ENCODE measurements at regions of chr3 and their contacts with region 1.

Region 1: DNA sequence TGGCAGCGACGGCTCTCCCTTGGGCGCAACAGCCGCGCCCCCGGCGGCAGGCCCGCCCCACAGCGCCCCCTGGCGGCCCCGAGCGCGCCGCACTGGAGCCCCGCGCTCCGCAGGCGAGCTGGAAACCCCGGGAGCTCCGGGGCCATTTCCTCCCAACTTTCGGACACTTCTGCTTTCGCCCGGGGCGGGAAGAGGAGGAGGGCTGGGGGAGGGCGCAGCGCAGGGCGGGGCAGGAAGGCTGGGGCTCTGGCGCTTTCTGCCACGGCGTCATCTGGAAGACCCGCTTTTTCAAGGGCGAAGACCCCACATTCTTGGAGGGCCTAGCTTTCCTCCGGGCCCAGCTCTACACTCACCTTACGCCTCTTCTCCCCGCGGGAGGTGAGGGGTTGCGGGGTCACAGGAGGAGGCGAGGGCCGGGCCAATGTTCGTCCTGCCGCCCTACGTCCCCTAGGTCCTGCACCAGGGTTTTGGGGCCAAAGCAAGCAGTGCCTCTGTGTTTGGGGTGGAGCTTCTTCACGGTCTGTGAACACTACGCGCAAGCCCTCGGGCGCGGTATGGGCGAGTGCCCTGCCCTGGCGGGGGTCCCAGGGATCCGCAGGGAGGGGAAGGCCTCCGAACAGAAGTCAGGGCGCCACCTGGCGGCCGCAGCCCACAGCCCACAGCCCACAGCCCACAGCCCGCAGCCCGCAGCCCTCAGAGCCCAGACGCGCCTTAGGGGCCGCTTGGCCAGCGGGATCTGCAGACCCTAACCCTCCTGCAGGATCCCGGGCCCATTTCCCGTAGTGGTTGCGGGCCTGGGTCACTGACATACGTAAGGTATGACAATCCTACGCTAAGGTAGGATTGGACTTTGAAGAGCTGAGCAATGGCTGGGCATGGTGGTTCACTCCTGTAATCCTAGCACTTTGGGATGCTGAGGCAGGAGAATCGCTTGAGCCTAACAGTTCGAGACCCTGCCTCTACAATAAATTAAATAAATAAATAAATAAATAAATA is 31.1 kb downstream of the FOXL2 start:
- DNase-seq: peak; percentile 85
- ATAC-seq: peak; percentile 87
- H3K4me3 Mint-ChIP-seq: peak overlapping the region; percentile 75
- H3K27ac Mint-ChIP-seq: peak overlapping the region; percentile 40
- H3K4me1 Mint-ChIP-seq: peaks cover 7% of the 10 kb centered on the region
- H3K27me3 Mint-ChIP-seq: peaks cover 20% of the 10 kb centered on the region

Region 2: DNA sequence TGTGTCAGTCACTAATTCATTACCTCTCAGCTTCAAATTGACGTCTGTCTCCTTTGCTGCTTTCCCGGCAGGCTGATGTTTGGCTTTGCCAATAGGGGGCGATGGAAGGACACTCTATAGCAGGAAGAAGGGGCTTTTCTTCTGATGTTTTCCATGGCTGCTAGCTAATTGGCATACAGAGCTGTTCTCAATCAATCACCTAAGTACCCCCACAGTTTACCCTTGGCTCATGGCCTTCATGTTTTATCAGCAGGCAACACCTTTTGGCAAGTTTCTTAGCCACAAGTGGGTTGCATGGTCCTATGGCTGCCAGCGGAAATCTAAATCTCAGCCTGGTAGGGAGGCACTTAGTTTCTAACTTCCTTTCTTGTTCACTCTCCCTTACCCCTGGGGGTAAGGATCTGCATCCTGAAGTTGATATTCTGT is 436.4 kb before region 1 on chr3:
- CTCF ChIA-PET with region 1: interaction called, 10 read pairs
- DNase-seq: peak; percentile 62
- ATAC-seq: peak; percentile 58
- H3K4me3 Mint-ChIP-seq: no peak overlapping the region
- H3K27ac Mint-ChIP-seq: no peak overlapping the region
- H3K4me1 Mint-ChIP-seq: no peaks in the 10 kb centered on the region
- H3K27me3 Mint-ChIP-seq: peaks cover 21% of the 10 kb centered on the region

Region 3: GRCh38 chr3:138600100-138600745 is 315.6 kb before region 1 on chr3:
- CTCF ChIA-PET with region 1: interaction called, 125 read pairs
- DNase-seq: no peak
- ATAC-seq: no peak
- H3K4me3 Mint-ChIP-seq: no peak overlapping the region
- H3K27ac Mint-ChIP-seq: no peak overlapping the region
- H3K4me1 Mint-ChIP-seq: peaks cover under 1% of the 10 kb centered on the region
- H3K27me3 Mint-ChIP-seq: no peaks in the 10 kb centered on the region

Region 4: DNA sequence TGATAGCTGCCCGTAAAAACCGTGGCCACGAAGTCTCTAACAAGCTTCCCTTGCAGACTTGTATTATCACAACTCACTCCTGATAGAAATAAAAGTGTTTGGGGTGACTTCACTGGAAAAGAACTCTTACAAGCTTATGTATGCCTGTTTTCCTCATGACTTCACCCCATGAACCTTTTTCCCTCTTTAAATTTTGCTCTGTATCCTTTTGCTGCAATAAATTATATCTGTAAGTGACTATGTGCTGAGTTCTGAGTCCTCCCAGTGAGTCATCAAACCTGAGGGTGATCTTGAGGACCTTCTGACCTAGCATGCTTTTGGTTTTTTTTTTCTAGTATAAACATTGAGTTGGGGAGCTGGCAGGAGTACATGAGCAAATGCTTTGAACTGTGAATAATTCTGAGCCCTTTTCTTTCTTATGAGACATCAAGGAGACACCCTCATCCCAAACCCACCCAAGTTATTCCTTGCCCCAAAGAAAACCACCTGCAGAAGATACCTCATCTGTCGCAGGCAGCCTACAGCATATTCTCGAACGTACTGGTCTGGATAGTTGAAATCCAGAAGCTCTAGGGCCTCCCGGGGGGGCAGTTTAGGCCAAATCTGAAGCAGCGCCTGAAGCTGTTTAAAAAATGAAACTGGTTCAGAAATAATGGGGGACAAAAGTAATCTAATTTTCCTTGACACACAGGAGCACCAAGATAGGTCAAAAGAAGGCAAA is 221.4 kb before region 1 on chr3:
- CTCF ChIA-PET with region 1: interaction called, 130 read pairs
- DNase-seq: no peak
- ATAC-seq: no peak
- H3K4me3 Mint-ChIP-seq: no peak overlapping the region
- H3K27ac Mint-ChIP-seq: no peak overlapping the region
- H3K4me1 Mint-ChIP-seq: no peaks in the 10 kb centered on the region
- H3K27me3 Mint-ChIP-seq: no peaks in the 10 kb centered on the region

Region 5: GRCh38 chr3:138717348-138717747 is 198.5 kb before region 1 on chr3:
- CTCF ChIA-PET with region 1: interaction called, 17 read pairs
- DNase-seq: no peak
- ATAC-seq: no peak
- H3K4me3 Mint-ChIP-seq: no peak overlapping the region
- H3K27ac Mint-ChIP-seq: no peak overlapping the region
- H3K4me1 Mint-ChIP-seq: peaks cover 15% of the 10 kb centered on the region
- H3K27me3 Mint-ChIP-seq: no peaks in the 10 kb centered on the region

Region 6: DNA sequence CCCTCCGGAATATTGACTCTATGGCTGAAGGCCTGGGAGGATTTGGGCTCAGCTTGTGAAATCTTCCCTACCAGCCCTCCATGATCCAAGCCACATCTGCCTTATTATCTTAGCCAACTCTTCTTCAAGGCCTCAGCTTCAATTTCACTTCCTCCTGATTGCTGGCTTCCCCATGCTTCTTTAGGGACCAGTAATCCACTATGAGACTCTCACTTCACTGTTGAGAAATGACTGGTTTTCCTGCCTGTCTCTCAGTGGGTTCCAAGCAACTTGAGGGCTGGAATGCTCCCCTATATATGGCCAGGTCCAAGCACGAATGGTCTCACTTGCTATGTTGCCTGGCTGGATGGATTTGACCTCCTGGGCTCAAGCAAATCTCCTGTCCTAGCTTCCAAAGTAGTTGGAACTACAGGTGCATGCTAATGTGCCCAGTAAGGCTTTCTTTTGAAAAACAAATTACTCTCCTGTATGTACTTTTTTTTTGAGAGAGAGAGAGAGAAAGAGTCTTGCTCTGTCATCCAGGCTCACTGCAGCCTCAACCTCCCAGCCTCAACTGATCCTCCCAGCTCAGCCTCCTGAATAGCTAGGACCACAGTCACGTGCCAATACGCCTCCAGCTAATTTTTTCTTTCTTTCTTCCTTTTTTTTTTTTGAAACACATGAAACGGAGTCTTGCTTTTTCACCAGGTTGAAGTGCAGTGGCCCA is 73.2 kb before region 1 on chr3:
- CTCF ChIA-PET with region 1: interaction called, 14 read pairs
- DNase-seq: no peak
- ATAC-seq: no peak
- H3K4me3 Mint-ChIP-seq: no peak overlapping the region
- H3K27ac Mint-ChIP-seq: no peak overlapping the region
- H3K4me1 Mint-ChIP-seq: no peaks in the 10 kb centered on the region
- H3K27me3 Mint-ChIP-seq: no peaks in the 10 kb centered on the region

Region 7: GRCh38 chr3:138935848-138936740 is 20.3 kb after region 1 on chr3:
- CTCF ChIA-PET with region 1: interaction called, 35 read pairs
- DNase-seq: peak; percentile 67
- ATAC-seq: peak; percentile 77
- H3K4me3 Mint-ChIP-seq: peak overlapping the region; percentile 52
- H3K27ac Mint-ChIP-seq: no peak overlapping the region
- H3K4me1 Mint-ChIP-seq: peaks cover 24% of the 10 kb centered on the region
- H3K27me3 Mint-ChIP-seq: peaks cover 86% of the 10 kb centered on the region